PC-3 (cell line): ENCODE measurements at regions of chr11 and their contacts with region 1.

Region 1: GRCh38 chr11:60363542-60364510 is 14.5 kb upstream of the MS4A7 start:
- DNase-seq: peak; percentile 92
- ATAC-seq: peak; percentile 81
- H3K4me3 ChIP-seq: no peak overlapping the region
- H3K27ac ChIP-seq: no peak overlapping the region
- H3K4me1 ChIP-seq: no peaks in the 10 kb centered on the region; the same call in 1 of the 2 replicates
- H3K27me3 ChIP-seq: peaks cover 9% of the 10 kb centered on the region; the same call in 1 of the 2 replicates
- CTCF ChIP-seq: peak; percentile 92

Region 2: GRCh38 chr11:60469723-60470122 is 105.9 kb after region 1 on chr11:
- CTCF ChIA-PET with region 1: no interaction called
- POLR2A ChIA-PET with region 1: no interaction called
- intact Hi-C with region 1: loop called (anchors 1 kb)
- DNase-seq: peak; percentile 31
- ATAC-seq: no peak
- H3K4me3 ChIP-seq: no peak overlapping the region
- H3K27ac ChIP-seq: no peak overlapping the region
- H3K4me1 ChIP-seq: no peaks in the 10 kb centered on the region
- H3K27me3 ChIP-seq: peaks cover 9% of the 10 kb centered on the region; the same call in 1 of the 2 replicates
- CTCF ChIP-seq: peak; percentile 64

Region 3: GRCh38 chr11:60485986-60486385 is 122.2 kb after region 1 on chr11:
- CTCF ChIA-PET with region 1: no interaction called
- POLR2A ChIA-PET with region 1: no interaction called
- intact Hi-C with region 1: loop called (anchors 1 kb)
- DNase-seq: peak; percentile 85
- ATAC-seq: peak; percentile 99
- H3K4me3 ChIP-seq: no peak overlapping the region
- H3K27ac ChIP-seq: no peak overlapping the region
- H3K4me1 ChIP-seq: no peaks in the 10 kb centered on the region
- H3K27me3 ChIP-seq: peaks cover 35% of the 10 kb centered on the region; the same call in 1 of the 2 replicates
- CTCF ChIP-seq: peak; percentile 97

Region 4: DNA sequence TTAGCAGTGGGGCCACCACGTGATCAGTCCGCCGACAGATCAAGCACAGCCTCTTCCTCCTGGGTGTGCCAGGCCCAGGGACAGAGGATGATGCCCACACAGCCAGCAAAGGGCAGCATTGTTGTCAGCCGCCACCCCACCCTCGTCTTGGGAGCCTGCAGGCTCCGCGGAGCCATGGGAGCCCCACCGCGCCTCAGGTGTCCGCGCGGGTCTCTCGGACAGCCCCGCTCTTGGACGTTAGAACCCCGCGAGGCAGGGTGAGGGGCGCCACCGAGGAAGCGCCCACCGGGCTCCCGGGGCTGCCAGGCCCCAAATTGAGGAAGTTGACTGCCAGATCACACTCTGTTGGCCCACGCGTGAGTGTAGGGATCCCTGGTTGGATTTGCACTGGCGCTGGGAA is 251.7 kb after region 1 on chr11:
- CTCF ChIA-PET with region 1: no interaction called
- POLR2A ChIA-PET with region 1: no interaction called
- intact Hi-C with region 1: loop called (anchors 1 kb)
- DNase-seq: no peak
- ATAC-seq: no peak
- H3K4me3 ChIP-seq: no peak overlapping the region
- H3K27ac ChIP-seq: no peak overlapping the region
- H3K4me1 ChIP-seq: no peaks in the 10 kb centered on the region
- H3K27me3 ChIP-seq: peaks cover 45% of the 10 kb centered on the region
- CTCF ChIP-seq: no peak